ENCODE measurements at regions of chr2 and their contacts with region 1.

Region 1: DNA sequence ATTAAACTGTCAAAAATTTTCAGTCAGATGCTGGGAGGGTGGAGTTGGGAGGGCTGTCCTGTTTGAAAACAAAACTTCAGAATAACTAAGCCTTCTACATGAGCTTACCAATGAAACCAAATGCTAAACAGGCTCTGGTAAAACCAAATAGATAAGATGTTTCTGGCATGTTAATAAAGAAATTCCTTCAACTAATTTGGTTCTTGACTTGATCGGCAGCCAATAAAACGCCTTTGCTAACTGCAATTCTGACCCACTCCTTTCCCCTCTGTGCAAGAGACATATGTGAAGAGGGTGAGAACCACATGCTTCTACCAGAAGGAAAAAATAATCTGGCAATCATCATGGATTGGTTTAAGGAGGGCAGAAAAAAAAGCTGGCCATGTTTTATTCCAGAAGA is 20.9 kb downstream of the MAP4K3 start:
- DNase-seq: no peak
- ATAC-seq: no peak
- H3K4me3 ChIP-seq: no peak overlapping the region
- H3K27ac ChIP-seq: no peak overlapping the region
- H3K4me1 ChIP-seq: peaks cover 23% of the 10 kb centered on the region
- H3K27me3 ChIP-seq: no peaks in the 10 kb centered on the region
- CTCF ChIP-seq: no peak

Region 2: GRCh38 chr2:39581866-39582265 is 165.7 kb after region 1 on chr2:
- CTCF ChIA-PET with region 1: no interaction called
- POLR2A ChIA-PET with region 1: interaction called, 11 read pairs
- intact Hi-C with region 1: no loop called
- DNase-seq: no peak
- ATAC-seq: no peak
- H3K4me3 ChIP-seq: no peak overlapping the region
- H3K27ac ChIP-seq: no peak overlapping the region
- H3K4me1 ChIP-seq: no peaks in the 10 kb centered on the region
- H3K27me3 ChIP-seq: no peaks in the 10 kb centered on the region
- CTCF ChIP-seq: no peak

Region 3: DNA sequence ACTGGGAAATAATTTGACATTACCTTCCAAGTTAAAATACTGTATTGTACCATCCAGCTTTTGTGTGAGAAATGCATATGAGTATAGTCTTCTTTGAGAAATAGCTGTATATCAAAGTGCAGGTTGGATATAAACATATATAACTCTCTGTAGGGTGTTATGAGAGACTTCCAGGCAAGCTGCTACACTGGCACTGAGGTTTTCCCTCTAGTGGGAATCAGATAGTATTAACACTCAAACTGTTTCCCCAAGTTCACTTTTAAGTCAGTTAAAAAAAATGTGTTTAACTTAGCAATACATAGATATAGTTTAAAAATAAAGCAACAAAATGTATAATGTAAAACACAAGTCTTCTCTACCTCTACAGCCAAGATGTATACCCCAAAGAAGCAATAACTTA is 1404.2 kb after region 1 on chr2:
- CTCF ChIA-PET with region 1: no interaction called
- POLR2A ChIA-PET with region 1: no interaction called
- intact Hi-C with region 1: no loop called
- DNase-seq: peak; percentile 18
- ATAC-seq: peak; percentile 71; the same call in 1 of the 2 replicates
- H3K4me3 ChIP-seq: no peak overlapping the region; the same call in 1 of the 2 replicates
- H3K27ac ChIP-seq: no peak overlapping the region
- H3K4me1 ChIP-seq: peaks cover 7% of the 10 kb centered on the region
- H3K27me3 ChIP-seq: no peaks in the 10 kb centered on the region
- CTCF ChIP-seq: peak; percentile 33